AG04449 (cell line): ENCODE measurements at regions of chr11 and their contacts with region 1.

Region 1: DNA sequence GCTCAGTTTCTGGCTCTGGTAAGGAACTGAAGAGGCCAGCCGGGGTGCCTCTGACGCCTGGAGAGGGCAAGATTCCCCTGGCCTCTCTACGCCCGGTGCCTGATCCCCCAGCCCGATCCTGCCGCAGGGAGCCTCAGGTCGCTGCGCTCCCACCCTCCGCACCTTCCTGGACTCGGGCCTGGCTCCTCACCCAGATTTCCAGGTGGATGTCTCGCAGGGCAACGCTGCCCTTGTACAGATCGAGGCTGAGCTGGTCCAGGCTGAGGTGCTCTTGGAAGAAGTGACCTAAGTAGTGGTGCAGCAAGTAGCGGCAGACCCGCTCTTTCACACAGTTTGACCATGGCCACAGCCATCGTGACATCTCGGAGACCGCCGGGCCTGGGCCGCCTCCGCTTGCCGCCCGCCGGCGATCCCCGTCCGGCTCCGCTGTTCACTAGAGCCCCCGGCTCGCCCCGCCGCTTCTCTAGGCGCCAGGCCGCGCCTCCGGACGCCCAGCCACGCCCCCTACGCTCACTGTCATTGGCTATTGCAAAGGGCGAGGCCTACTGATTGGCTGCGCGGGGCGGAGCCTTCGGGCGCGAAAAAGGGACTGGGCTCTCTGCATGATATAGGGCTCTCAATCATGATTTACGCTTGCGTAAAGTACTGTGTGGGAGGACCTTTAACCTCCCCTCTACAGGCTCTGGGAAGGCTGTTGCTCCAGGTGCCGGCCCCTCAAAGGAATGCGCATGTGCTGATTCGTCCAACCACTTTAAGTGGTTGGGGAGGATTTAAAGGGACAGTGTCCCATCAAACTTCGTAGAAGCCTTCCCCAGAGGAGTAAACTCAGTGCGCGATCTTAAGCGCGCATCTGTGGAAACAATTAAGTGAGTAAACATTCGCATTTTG is at the start of gene ATG2A:
- DNase-seq: peak; percentile 96
- H3K4me3 ChIP-seq: peak within 1 kb of the TSS; percentile 64
- CTCF ChIP-seq: no peak

Region 2: DNA sequence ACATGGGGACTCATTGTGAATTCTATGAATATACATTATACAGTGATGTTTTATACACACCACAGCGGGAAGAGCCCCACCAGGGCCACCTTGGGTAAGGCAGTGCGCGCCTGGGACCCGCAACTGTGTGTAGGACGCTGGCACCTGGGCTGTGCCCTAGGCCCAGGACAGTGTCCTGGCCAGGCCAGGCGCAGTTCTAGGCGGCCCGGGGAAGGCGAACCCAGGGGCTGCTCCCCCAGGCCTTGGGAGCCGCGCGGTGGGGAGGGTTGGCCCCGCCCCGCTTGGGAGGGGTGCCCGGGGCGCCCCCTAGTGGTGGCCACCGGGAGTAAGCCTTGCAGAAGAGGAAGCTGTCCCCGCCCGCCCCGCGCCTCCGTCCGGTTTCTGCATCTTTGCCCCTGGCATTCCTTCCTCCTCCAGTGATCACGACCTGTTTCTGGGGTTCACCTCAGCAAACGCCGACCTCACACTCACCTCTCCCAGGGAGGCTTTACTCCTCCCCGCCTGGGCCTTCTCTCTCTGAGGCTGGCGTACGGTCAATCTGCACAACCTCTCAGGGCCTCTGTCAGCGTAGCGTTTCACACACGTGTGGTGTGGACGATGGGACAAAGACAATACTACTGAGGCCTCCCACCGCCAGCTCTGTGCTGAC is 29.1 kb before region 1 on chr11:
- CTCF ChIA-PET with region 1: interaction called, 17 read pairs
- POLR2A ChIA-PET with region 1: no interaction called
- DNase-seq: no peak
- H3K4me3 ChIP-seq: peak overlapping the region; percentile 33
- CTCF ChIP-seq: peak; percentile 97

Region 3: DNA sequence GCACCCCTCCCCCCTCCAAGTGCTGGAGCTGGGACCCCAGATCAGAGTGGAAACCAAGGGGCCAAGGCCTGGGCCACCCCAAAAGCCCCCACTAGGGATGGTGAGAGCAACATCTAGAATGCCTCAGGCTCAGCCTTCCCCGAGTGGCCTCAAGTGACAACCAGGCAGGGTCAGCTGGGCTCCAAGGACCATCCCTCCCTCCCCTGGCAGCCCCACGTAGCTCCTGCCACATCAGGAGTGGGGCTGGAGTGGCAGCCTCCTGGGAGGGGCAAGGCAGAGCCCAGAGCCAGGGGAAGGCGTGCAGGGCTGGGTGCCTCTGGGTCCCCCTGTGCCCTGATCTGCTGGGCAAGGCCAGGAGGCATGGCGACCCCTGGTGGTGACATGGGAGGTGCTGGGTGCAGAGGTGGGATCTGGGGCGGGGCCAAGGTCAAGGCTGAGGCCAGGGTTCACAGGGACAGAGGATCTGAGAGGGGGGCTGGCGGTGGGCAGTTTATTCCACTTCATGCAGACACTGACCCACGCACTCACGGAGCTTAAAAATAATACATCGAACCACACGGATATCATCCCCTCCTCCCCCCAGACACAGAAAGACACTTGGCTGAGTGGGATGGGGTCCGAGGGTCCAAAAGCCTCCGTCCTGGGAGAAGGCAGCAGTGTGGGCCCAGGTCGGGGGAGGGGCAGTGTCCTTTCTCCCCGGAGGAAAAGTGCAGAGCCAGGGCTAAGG is 22.8 kb before region 1 on chr11:
- CTCF ChIA-PET with region 1: interaction called, 40 read pairs
- POLR2A ChIA-PET with region 1: no interaction called
- DNase-seq: no peak
- H3K4me3 ChIP-seq: no peak overlapping the region
- CTCF ChIP-seq: peak; percentile 96

Region 4: DNA sequence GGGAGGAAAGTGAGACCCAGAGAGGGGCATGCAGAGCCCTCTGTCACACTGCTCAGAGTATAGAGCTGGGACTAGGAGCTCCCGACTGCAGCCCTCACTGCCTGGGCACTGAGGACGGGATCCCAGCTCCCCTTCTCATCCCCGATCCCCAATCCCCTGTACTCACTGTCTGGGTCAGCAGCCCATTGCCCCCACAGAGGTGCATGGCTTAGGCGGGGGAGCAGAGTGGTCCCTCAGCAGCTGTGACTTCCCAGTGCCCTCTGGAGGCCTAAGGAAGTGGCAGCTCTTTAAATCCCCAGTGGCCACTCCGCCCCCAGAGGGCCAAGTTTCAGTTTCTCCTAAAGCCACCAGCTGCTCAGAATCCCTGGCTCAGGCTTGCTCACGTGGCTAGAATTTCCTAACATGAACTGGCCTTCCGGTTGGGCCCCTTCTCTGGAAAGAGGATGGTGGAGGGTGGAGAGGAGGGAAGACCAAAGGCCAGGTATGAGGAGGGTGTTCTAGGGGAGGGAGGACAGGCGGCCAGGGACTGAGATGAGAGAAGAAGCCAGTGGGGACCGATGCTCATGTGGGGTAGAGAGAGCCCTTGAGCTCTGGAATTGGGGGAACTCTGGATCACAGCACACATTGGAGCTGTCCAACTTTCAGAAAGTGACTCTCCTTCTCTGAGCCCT is 79.8 kb after region 1 on chr11 and contains the start of gene BATF2:
- CTCF ChIA-PET with region 1: interaction called, 10 read pairs
- POLR2A ChIA-PET with region 1: no interaction called
- DNase-seq: no peak
- H3K4me3 ChIP-seq: peak within 1 kb of the TSS; percentile 40
- CTCF ChIP-seq: peak; percentile 52